A673 (cell line): ENCODE measurements at regions of chr5 and their contacts with region 1.

Region 1: DNA sequence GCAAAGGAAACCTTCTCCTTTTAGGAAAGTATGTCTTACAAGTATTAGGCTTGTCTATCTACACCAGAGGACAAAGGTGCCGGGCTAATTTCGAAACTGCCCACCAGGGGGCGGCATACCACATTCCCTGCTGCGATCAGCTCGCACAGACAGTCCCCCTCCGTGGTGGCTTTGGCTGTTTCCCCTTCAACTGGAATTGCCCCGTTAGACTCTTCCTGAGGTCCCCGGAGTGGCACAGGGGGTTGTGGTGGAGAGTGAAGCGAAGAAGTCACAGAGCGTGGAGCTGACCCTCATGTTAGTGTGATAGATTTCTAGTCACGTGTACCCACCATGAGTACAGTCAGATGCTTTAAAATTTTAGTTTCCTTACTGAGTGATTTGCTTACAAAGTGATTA is 17.5 kb downstream of the PTTG1 start:
- DNase-seq: peak; percentile 79
- H3K4me3 ChIP-seq: peak overlapping the region; percentile 21
- H3K27ac ChIP-seq: no peak overlapping the region
- H3K4me1 ChIP-seq: no peaks in the 10 kb centered on the region
- H3K27me3 ChIP-seq: no peaks in the 10 kb centered on the region
- CTCF ChIP-seq: peak; percentile 87

Region 2: DNA sequence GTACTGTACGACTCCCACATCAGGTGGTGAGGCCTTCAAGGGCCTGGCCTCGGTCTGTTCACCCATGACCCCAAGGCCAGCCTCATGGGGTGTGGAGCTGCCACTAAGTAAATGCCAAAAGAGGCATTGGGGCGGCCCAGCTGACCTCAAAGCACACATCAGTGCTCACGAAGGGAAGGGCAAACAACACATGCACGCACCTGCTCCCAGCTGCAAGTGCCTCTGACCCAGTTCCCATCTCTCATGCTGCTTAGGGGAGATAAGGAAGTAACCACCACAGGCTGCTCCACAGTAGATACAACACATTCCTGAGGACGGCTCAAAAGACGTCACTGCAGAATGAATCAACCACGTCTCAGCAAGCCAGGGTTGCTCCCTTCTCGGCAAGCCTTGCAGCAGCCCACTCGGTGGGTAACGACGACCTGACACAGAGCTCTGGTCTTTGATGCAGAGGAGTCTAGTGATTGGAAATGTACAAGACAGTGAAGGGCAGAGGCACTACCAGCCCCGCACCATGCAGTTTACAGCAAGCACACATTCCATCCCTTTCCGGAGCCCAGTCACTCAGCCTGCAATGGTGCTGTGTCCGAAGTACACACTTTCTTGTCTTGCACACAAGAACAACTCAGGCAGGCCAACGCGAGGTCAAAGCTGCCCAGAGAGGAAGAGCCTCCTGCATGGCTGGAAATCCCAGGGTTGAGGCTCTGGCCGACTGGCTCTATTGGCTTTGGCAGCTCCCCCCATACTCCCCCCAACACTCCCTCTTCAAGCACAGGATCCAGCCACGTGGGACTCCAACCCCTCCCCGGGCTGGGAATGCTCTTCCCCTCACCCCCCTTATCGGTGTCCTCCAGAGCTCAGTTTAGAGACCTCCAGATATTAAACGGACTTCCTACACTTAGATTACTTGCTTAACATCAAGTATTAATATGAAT is 178.1 kb before region 1 on chr5:
- CTCF ChIA-PET with region 1: no interaction called
- POLR2A ChIA-PET with region 1: no interaction called
- intact Hi-C with region 1: no loop called
- DNase-seq: no peak
- H3K4me3 ChIP-seq: no peak overlapping the region
- H3K27ac ChIP-seq: no peak overlapping the region
- H3K4me1 ChIP-seq: peaks cover 27% of the 10 kb centered on the region
- H3K27me3 ChIP-seq: no peaks in the 10 kb centered on the region
- CTCF ChIP-seq: no peak

Region 3: DNA sequence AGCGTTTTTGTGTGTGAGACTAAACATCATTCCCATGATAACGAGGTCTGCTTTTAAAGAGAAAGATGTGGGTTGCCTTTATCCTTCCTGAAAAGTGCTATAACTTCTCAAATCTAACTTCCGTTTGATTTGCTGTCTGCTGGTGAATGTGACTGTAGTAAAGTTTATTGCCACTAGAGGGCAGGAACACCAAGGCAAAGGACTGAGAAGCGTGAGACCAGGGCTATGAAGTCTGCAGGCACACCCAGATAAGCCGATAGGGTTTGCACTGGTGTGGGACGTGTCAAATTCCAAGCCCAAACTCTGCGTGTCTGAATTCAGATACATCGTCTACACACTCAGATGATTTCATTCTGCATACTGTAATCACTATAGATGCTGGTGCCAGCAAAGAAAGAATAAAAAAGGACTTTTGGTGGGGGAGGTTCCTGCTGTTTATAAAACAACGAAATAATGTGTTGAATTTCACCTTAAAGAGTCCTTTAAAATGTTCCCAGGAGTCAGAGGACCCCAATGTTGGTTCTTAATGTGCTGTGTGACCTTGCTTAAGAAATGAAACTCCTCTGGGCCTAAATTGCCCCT is 69.7 kb after region 1 on chr5:
- CTCF ChIA-PET with region 1: interaction called, 4 read pairs
- POLR2A ChIA-PET with region 1: no interaction called
- intact Hi-C with region 1: loop called (anchors 5 kb)
- DNase-seq: peak; percentile 76
- H3K4me3 ChIP-seq: no peak overlapping the region
- H3K27ac ChIP-seq: no peak overlapping the region
- H3K4me1 ChIP-seq: no peaks in the 10 kb centered on the region
- H3K27me3 ChIP-seq: peaks cover 51% of the 10 kb centered on the region
- CTCF ChIP-seq: peak; percentile 78